Stomach (tissue), 19 donors: ENCODE measurements at regions of chr1 and their contacts with region 1.

Region 1: DNA sequence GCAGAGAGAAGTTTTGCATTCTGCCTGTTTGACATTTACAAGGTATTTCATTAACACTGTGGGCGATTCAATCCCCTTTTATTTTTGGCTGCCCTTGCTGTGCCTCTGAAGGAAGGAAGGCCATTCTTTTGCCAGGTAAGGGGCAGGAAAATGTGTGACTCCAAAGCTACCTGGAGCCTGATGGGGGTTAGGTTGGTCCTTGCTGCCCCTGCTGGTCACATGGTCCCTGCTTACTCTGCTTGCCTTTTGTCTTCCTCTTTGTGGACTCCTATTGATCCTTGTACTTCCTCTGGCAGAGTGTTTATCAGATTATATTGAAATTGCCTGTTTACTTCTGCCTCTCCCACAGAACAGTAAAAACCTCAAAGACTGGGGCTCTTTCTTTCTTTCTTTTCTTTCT is 65.7 kb downstream of the ST6GALNAC3 start:
- DNase-seq: no peak
- H3K4me3 ChIP-seq: no peak overlapping the region
- H3K27ac ChIP-seq: peak overlapping the region in 3 of 5 donors; percentile 22 to 65 (median 27)
- H3K4me1 ChIP-seq: peaks cover 3 to 25% (median 11%) of the 10 kb centered on the region in 4 donors
- H3K27me3 ChIP-seq: no peaks in the 10 kb centered on the region
- CTCF ChIP-seq: no peak
- EP300 ChIP-seq: no peak
- POLR2A ChIP-seq: no peak

Region 2: DNA sequence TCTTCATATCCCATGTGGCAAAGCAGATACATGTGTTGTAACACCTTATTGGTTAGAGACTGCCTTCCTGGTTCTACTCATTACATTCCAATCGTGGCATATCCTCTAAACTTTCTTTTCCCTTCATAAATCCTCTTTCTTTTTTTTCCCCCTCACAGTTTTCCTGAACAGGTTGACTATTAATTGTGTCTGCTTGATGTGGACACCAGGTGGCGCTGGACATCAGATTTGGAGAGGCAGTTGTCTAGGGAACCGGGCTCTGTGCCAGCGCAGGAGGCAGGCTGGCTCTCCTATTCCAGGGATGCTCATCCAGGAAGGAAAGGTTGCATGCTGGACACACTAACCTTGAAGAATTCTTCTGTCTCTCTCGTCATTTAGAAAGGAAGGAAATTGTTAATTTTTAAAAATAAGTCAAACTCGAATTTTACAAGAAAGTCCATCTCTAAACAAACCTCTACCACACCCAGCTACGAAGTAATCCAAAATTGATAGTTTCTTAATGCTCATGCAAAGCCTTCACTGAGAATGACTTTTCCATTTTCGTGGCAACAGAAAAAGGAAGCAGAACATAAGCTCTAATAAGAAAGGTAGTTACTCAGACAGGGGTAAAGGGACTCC is 148.6 kb before region 1 on chr1:
- intact Hi-C with region 1: loop called (anchors 10 kb)
- DNase-seq: peak; percentile 95 to 96
- H3K4me3 ChIP-seq: no peak overlapping the region
- H3K27ac ChIP-seq: no peak overlapping the region
- H3K4me1 ChIP-seq: peaks cover 0 to 4% (median 0%) of the 10 kb centered on the region in 4 donors
- H3K27me3 ChIP-seq: no peaks in the 10 kb centered on the region
- CTCF ChIP-seq: peak in 5 of 7 experiments; percentile 59 to 79 (median 74)
- EP300 ChIP-seq: no peak
- POLR2A ChIP-seq: no peak

Region 3: GRCh38 chr1:76713535-76713934 is 573.3 kb after region 1 on chr1:
- intact Hi-C with region 1: no loop called
- DNase-seq: no peak
- H3K4me3 ChIP-seq: no peak overlapping the region
- H3K27ac ChIP-seq: no peak overlapping the region
- H3K4me1 ChIP-seq: no peaks in the 10 kb centered on the region
- H3K27me3 ChIP-seq: no peaks in the 10 kb centered on the region
- CTCF ChIP-seq: no peak
- EP300 ChIP-seq: no peak
- POLR2A ChIP-seq: no peak